Caco-2 (cell line): ENCODE measurements at regions of chr11 and their contacts with region 1.

Region 1: DNA sequence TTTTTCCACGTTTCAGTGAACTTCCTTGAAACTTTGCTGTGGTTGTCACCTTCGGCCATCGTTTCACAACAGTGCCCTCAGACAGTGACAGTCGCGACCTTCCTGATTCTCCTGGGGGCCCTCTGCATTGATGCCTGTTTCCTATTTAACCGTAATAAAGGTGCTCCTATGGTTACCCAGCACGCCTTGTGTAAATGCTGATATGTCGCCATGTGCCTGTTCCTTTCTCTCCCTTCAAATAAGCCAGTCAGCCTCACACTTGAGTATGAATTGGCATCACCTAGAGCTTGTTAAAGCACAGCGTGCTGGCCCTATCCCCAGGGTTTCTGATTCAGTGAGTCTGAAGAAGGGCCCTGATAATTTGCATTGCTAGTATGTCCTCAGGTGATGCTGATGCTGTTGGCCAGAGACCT is 104.8 kb downstream of the MICAL2 start:
- DNase-seq: peak; percentile 60 to 61
- H3K4me3 ChIP-seq: no peak overlapping the region
- H3K4me3 Mint-ChIP-seq: no peak overlapping the region
- H3K27ac Mint-ChIP-seq: peak overlapping the region; percentile 87
- H3K4me1 ChIP-seq: peaks cover 56% of the 10 kb centered on the region
- H3K4me1 Mint-ChIP-seq: peaks cover 53% of the 10 kb centered on the region
- H3K27me3 ChIP-seq: no peaks in the 10 kb centered on the region
- H3K27me3 Mint-ChIP-seq: no peaks in the 10 kb centered on the region
- CTCF ChIP-seq: no peak

Region 2: DNA sequence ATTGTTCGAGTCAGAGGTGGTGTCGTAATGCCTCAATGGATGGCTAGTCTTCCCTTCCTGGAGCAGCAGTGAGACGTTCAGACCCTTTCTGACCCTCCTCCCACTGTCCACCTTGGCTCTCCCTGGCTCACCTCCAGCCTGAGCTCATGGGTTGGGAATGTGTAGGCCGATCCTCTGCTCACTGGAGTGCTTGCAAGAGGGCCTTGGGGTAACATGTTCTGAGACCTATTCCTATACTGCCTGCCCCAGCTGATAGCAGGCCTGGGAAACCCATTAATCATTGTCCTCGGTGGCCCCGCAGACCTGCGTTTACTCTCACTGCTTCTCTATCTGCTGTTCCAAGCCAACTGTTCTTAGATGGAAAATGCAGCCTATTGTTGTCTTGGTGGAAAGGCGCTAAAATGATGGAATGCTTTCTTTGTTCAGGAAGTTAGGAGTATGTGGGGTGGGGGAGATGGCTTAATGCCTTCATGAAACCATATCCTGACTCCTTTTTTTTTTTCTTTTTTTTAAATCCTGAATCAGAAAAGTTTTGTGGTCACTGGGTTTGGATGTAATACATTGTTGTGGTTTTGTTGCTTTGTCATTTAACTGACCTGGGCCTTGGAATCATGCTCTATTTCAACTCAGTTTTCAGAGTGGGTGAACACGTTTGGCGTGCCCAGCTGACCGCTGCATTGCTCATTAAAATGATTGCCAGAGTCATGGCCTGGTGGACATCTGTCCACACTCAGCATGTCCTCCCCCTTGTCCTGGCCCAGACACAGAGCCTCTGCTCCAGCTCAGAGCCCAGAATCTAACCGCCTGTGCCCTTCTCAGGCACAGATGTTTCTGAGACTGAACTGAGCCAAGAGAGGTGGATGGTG is 32.3 kb before region 1 on chr11:
- CTCF ChIA-PET with region 1: interaction called, 8 read pairs
- POLR2A ChIA-PET with region 1: no interaction called
- intact Hi-C with region 1: loop called (anchors 1 kb)
- DNase-seq: peak; percentile 71 to 91
- H3K4me3 ChIP-seq: no peak overlapping the region
- H3K4me3 Mint-ChIP-seq: no peak overlapping the region
- H3K27ac Mint-ChIP-seq: peak overlapping the region; percentile 55
- H3K4me1 ChIP-seq: peaks cover 73% of the 10 kb centered on the region
- H3K4me1 Mint-ChIP-seq: peaks cover 45% of the 10 kb centered on the region
- H3K27me3 ChIP-seq: no peaks in the 10 kb centered on the region
- H3K27me3 Mint-ChIP-seq: no peaks in the 10 kb centered on the region
- CTCF ChIP-seq: no peak

Region 3: DNA sequence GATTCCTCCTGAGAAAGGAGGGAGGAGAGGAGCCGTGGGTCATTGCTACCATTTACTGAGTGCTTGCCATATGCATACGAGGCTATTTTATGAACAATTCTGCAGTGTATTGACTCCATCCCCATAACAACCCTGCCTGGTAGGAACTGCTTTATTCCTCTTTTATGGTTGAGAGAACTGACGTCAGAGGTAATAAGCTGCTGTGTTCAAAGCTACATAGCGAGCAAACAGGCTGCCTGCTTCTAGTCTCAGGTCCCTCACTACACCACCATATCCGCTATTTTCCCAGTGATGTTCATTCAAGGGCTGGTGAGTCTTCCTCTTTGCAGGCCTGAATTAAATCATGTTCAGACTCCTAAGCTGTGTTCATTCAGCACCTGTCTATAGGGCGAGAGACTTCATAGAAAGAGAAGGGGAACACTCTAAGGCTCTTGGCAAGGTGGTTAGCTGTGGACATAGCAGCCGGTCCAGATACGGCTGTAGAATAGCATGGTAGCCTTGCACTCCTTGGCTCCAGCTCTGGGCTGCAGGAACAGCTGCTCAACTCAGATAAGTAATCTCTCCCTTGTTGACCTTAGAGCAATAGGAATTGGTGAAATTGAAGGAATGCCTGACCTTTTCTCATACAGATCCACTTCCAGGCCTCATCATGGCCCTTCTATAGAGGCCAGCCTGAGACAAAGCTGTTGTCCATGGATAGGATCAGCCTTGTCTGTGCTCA is 22.2 kb before region 1 on chr11:
- CTCF ChIA-PET with region 1: no interaction called
- POLR2A ChIA-PET with region 1: no interaction called
- intact Hi-C with region 1: no loop called
- DNase-seq: no peak
- H3K4me3 ChIP-seq: no peak overlapping the region
- H3K4me3 Mint-ChIP-seq: no peak overlapping the region
- H3K27ac Mint-ChIP-seq: peak overlapping the region; percentile 56
- H3K4me1 ChIP-seq: peaks cover 40% of the 10 kb centered on the region
- H3K4me1 Mint-ChIP-seq: peaks cover 66% of the 10 kb centered on the region
- H3K27me3 ChIP-seq: no peaks in the 10 kb centered on the region
- H3K27me3 Mint-ChIP-seq: no peaks in the 10 kb centered on the region
- CTCF ChIP-seq: no peak